Posterior cingulate gyrus (tissue), 11 donors: ENCODE measurements at regions of chr2 and their contacts with region 1.

Region 1: GRCh38 chr2:232697100-232697865 is at the start of gene GIGYF2:
- DNase-seq: peak; percentile 93 to 99 (median 96)

Region 2: DNA sequence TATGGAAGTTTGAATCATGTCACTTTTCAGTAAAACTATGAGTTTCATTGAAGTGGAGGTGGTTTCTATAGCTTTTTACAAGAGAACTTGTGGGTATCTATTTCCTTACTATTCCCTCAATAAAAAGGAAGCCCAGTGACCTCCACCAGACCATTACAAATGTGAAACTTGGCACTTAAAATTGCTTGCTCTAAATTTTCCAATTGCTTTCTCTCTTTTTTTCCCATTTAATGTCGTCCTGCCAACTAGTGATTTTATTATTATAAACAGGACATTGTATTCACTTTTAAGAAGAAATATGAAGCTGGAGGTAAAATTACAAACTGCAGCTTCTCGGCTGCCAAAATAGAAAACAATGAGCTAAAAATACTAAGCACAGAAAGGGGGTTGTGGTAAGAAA is 526.9 kb before region 1 on chr2:
- intact Hi-C with region 1: no loop called
- DNase-seq: no peak

Region 3: GRCh38 chr2:232550354-232551249 is 146.7 kb before region 1 on chr2 and contains the starts of genes EIF4E2 and TIGD1:
- intact Hi-C with region 1: loop called (anchors 5 kb)
- DNase-seq: peak; percentile 91 to 99 (median 94)

Region 4: DNA sequence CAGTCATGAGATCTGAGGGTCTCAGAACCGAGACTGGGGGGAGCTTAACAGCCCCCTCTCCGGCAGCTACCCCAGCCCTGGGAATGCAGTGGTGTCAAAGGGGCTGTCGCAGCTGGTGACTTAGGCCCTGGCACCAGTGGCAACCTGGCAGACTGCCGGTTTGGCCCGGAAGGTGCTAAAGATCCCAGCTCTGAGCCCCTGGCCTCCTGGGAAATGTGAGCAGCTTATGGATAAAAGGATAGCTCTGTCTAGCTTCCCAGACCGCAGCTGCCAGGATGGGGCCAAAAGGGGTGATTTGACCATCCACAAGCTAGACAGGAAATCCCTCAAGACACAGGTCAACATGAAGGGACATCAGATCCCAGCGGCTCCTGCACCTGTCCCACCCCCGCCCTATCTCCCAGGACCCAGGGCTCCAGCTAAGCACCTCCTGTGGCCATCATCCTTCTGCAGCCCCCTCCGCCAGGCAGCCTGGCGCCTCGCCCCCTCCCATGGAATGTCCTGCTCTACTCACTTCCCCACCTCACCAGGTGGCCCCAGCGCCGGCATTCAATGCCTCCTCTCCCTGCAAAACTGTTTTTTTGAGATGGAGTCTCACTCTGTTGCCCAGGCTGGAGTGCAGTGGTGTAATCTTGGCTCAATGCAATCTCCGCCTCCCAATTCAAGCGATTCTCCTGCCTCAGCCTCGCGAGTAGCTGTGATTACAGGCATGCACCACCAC is 97.1 kb before region 1 on chr2:
- intact Hi-C with region 1: loop called (anchors 10 kb)
- DNase-seq: peak in 2 of 10 donors; percentile 40 to 62

Region 5: DNA sequence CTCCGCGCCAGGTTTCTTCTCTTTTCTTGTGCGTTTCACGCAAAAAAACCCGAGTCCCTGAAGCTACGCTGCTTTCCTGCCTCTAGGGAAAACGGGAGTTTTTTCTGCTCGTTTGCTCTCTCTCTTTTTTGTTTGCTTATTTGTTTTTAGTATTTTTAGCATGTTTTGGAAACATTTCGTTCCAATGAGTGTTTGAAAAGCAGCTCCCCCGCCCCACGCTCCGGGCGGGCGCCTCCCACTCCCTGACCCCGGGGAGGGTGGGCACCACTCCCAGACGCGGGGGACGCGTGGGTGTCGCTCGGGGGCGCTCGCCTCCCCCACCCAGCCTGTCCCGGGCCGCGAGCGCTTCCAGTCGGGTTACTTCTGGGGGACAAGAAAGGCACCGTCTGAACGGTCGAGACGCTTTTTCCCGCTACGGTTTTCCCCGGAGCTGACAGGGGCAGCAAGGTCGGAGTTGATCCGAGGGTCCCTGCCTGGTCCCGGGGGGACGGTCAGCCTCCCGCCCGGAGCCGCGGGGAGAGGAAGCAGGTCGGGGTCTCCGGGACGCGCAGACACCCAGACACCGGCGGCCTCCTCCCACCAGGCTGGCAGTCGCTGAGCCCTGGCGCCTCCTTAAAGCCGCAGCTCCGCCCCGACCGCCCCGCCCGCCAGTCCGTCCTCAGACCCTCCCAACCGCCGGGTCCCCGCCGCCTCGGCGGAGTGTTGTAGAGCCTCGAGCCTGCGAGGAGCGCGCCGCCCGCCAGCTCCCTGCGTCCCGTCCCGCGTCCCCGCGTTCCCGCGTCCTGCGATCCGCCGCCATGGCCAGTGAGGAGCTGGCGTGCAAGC is 64.2 kb before region 1 on chr2 and contains the start of gene EFHD1:
- intact Hi-C with region 1: loop called (anchors 10 kb)
- DNase-seq: peak; percentile 70 to 97 (median 80)